ENCODE measurements at regions of chr3 and their contacts with region 1.

Region 1: DNA sequence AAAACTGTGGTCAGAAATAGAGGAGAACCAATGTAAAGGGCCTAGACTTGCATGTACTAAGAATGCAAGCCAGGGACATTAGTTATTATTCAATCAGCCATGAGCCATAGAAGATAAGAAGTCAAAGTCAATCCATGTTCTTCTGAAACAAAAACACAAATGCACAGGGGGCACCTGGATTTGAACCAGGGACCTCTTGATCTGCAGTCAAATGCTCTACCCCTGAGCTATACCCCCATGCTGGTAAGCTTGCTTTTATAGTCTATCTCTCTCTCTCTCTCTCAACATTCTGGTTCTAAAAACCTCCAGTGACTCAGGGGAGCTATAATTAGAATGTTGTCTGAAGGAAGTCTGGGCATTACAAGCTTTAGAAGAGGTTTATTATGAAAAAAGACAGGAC is 85.6 kb upstream of the ACP3 start:
- DNase-seq: no peak
- ATAC-seq: no peak
- H3K4me3 Mint-ChIP-seq: no peak overlapping the region
- H3K27ac Mint-ChIP-seq: no peak overlapping the region
- H3K4me1 Mint-ChIP-seq: no peaks in the 10 kb centered on the region
- H3K27me3 Mint-ChIP-seq: peaks cover 13% of the 10 kb centered on the region

Region 2: GRCh38 chr3:132180337-132180791 is 51.3 kb before region 1 on chr3:
- CTCF ChIA-PET with region 1: no interaction called
- POLR2A ChIA-PET with region 1: no interaction called
- intact Hi-C with region 1: no loop called
- DNase-seq: no peak
- ATAC-seq: peak; percentile 30
- H3K4me3 Mint-ChIP-seq: no peak overlapping the region
- H3K27ac Mint-ChIP-seq: no peak overlapping the region
- H3K4me1 Mint-ChIP-seq: peaks cover 3% of the 10 kb centered on the region
- H3K27me3 Mint-ChIP-seq: peaks cover 6% of the 10 kb centered on the region

Region 3: GRCh38 chr3:132290833-132291232 is 59.2 kb after region 1 on chr3:
- CTCF ChIA-PET with region 1: no interaction called
- POLR2A ChIA-PET with region 1: no interaction called
- intact Hi-C with region 1: loop called in 1 of 2 experiments (anchors 10 kb)
- DNase-seq: no peak
- ATAC-seq: no peak
- H3K4me3 Mint-ChIP-seq: no peak overlapping the region
- H3K27ac Mint-ChIP-seq: no peak overlapping the region
- H3K4me1 Mint-ChIP-seq: no peaks in the 10 kb centered on the region
- H3K27me3 Mint-ChIP-seq: peaks cover 24% of the 10 kb centered on the region